ENCODE measurements at regions of chr14 and their contacts with region 1.

Region 1: GRCh38 chr14:28966416-28967233 is 200.0 kb downstream of the FOXG1 start:
- DNase-seq: no peak

Region 2: GRCh38 chr14:28756884-28757570 is 209.6 kb before region 1 on chr14:
- intact Hi-C with region 1: no loop called
- DNase-seq: peak in 4 of 10 donors; percentile 23 to 93 (median 55)

Region 3: DNA sequence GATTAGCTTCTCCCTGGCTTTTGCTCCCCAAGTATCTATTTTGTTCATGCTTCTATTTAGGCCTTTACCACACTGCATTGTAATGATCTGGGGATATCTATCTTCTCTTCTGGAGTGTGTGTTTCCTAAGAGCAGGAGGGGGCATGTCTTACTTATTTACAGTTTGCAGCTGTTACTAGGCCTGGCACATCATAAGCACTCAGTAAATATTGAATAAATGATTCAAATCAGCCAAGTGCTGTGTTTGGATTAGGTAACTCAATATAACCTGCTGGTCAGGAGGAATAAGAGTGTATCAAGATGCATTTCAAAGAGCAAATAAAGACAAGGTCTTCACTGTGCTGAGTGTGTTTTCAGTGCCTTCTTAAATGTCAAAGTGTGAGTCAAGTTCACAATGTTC is 14.0 kb before region 1 on chr14:
- intact Hi-C with region 1: loop called (anchors 1 kb)
- DNase-seq: no peak

Region 4: GRCh38 chr14:28999656-29000055 is 33.0 kb after region 1 on chr14:
- intact Hi-C with region 1: no loop called
- DNase-seq: no peak

Region 5: DNA sequence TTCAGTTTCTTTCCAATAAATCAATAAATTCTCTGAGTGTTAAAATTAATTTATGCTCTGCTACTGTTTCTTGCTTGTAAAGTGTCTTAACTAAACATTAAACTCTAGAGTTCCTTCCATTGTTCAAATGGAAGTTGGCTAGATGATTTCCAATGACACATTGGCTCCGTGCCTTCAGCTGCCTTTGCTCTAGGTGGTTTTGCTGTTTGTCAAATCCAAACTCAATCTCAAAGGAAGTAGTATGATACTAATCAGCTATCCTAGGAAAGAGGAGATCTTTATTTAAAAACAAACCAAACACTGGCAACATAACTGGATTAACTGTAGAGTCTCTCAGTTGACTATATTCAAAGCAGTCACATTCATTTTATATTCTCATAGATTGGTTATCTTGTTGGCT is 156.4 kb after region 1 on chr14:
- intact Hi-C with region 1: no loop called
- DNase-seq: no peak